ENCODE measurements at regions of chr16 and their contacts with region 1.

Region 1: GRCh38 chr16:56513972-56514371 is 5.9 kb downstream of the BBS2 start:
- DNase-seq: peak; percentile 67
- H3K4me3 Mint-ChIP-seq: no peak overlapping the region
- H3K27ac Mint-ChIP-seq: no peak overlapping the region
- H3K4me1 Mint-ChIP-seq: peaks cover 21% of the 10 kb centered on the region
- H3K27me3 Mint-ChIP-seq: no peaks in the 10 kb centered on the region
- CTCF ChIP-seq: peak; percentile 50

Region 2: DNA sequence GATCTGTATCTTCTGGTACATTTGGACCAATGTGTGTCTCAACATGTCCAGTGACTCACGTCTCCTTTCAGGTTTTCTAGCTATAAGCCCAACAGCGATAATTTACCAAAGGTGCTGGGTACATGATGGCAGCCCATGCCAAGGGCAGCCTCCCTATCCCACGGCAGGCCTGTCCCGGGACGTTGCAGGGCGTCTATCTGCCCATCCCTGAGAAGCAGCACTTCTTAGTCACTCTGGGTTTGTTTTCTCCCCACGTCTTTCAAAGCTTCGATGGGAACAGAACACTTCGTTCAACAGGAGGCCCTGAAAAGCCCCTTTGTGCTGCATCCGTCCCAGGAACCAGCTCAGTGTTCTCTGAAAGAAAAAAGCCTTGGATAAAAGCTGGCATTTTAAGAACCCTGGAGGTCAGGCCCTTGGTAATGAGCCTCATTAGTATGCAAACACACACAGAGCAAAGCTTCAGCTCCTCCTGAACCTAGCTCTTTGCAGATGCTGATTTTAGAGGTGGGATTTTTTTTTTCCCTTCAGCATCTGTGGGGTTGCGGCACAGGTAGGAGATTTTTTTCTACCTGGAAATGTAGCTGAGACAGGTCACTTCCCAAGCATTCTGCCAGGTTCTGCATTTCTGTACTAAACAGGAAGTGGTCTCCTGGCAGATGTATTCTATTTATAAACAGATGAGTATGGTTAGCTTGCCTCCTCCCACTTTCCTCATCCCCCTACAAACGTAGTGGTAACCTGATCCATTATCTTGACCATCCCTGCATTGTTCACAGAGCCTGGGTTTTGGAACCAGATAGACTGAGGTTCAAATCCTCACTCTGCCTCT is 33.4 kb after region 1 on chr16:
- CTCF ChIA-PET with region 1: interaction called, 10 read pairs
- POLR2A ChIA-PET with region 1: interaction called, 40 read pairs
- intact Hi-C with region 1: no loop called
- DNase-seq: peak; percentile 60
- H3K4me3 Mint-ChIP-seq: no peak overlapping the region
- H3K27ac Mint-ChIP-seq: no peak overlapping the region
- H3K4me1 Mint-ChIP-seq: peaks cover 20% of the 10 kb centered on the region
- H3K27me3 Mint-ChIP-seq: no peaks in the 10 kb centered on the region
- CTCF ChIP-seq: no peak

Region 3: DNA sequence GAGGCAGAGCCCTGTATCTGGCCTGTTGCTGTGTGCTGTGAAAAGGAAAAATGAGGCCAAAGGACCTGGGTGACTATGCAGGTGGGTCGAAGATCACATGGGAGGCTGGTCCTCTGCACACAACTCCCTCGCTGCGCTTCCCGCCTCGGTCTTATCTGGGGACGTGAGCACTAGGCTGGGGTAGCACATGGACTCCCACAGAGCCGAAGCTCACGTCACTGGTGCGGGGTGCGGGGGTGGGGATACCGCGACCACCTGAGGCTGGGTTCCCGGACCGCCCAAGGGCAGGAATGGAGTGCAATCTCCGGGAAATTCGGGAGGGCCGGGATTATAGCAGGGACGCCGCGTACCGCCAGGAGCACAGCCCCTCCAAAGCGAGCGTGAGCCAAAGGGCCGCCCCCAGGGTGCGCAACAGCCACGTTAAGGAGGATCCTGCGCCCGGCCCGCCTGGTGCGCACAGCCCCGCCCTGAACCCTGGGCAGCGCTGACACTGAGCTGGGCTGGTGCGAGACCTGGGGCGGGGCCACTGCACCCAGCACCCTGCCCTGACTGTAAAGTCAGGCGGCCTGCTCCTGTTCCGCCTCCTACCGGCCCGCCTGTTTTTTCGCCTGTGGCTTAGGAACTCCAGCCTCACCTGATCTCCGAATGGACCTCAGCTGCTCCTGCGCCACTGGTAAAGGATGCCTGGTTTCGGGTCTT is 129.3 kb after region 1 on chr16:
- CTCF ChIA-PET with region 1: interaction called, 4 read pairs
- POLR2A ChIA-PET with region 1: interaction called, 3 read pairs
- intact Hi-C with region 1: loop called (anchors 5 kb)
- DNase-seq: peak; percentile 86
- H3K4me3 Mint-ChIP-seq: peak overlapping the region; percentile 25
- H3K27ac Mint-ChIP-seq: no peak overlapping the region
- H3K4me1 Mint-ChIP-seq: peaks cover 3% of the 10 kb centered on the region
- H3K27me3 Mint-ChIP-seq: no peaks in the 10 kb centered on the region
- CTCF ChIP-seq: peak; percentile 62